A549 (cell line): ENCODE measurements at regions of chr10 and their contacts with region 1.

Region 1: GRCh38 chr10:97196223-97197029 is 10.7 kb upstream of the SLIT1 start:
- DNase-seq: peak; percentile 67 to 78
- ATAC-seq: peak; percentile 92 to 94
- H3K4me3 ChIP-seq: peak overlapping the region; percentile 58
- H3K27ac ChIP-seq: peak overlapping the region; percentile 51 to 79; a peak in 5 of 6 replicates
- H3K4me1 ChIP-seq: no peaks in the 10 kb centered on the region
- CTCF ChIP-seq: peak; percentile 88
- EP300 ChIP-seq: no peak
- POLR2A ChIP-seq: no peak
- RAD21 ChIP-seq: peak; percentile 54 to 62

Region 2: GRCh38 chr10:97048649-97049427 is 147.6 kb before region 1 on chr10:
- CTCF ChIA-PET with region 1: no interaction called
- POLR2A ChIA-PET with region 1: no interaction called
- DNase-seq: no peak
- ATAC-seq: no peak
- H3K4me3 ChIP-seq: no peak overlapping the region
- H3K27ac ChIP-seq: no peak overlapping the region
- H3K4me1 ChIP-seq: no peaks in the 10 kb centered on the region; the same call in 2 of the 3 replicates
- CTCF ChIP-seq: no peak
- EP300 ChIP-seq: no peak
- POLR2A ChIP-seq: no peak
- RAD21 ChIP-seq: no peak

Region 3: GRCh38 chr10:97138174-97138573 is 58.3 kb before region 1 on chr10:
- CTCF ChIA-PET with region 1: interaction called, 19 read pairs
- POLR2A ChIA-PET with region 1: no interaction called
- DNase-seq: peak; percentile 35 to 58
- ATAC-seq: peak; percentile 78 to 91; a peak in 5 of 6 replicates
- H3K4me3 ChIP-seq: no peak overlapping the region
- H3K27ac ChIP-seq: no peak overlapping the region
- H3K4me1 ChIP-seq: no peaks in the 10 kb centered on the region
- CTCF ChIP-seq: peak; percentile 46
- EP300 ChIP-seq: no peak
- POLR2A ChIP-seq: no peak
- RAD21 ChIP-seq: peak; percentile 31 to 36; a peak in 3 of 5 replicates

Region 4: GRCh38 chr10:97179731-97180362 is 16.6 kb before region 1 on chr10:
- CTCF ChIA-PET with region 1: interaction called, 96 read pairs
- POLR2A ChIA-PET with region 1: no interaction called
- DNase-seq: no peak
- ATAC-seq: peak in 1 of 2 experiments; percentile 65; a peak in 3 of 6 replicates
- H3K4me3 ChIP-seq: no peak overlapping the region
- H3K27ac ChIP-seq: no peak overlapping the region
- H3K4me1 ChIP-seq: no peaks in the 10 kb centered on the region
- CTCF ChIP-seq: no peak
- EP300 ChIP-seq: no peak
- POLR2A ChIP-seq: no peak
- RAD21 ChIP-seq: no peak